T-cell (primary cell): ENCODE measurements at regions of chr13 and their contacts with region 1.

Region 1: DNA sequence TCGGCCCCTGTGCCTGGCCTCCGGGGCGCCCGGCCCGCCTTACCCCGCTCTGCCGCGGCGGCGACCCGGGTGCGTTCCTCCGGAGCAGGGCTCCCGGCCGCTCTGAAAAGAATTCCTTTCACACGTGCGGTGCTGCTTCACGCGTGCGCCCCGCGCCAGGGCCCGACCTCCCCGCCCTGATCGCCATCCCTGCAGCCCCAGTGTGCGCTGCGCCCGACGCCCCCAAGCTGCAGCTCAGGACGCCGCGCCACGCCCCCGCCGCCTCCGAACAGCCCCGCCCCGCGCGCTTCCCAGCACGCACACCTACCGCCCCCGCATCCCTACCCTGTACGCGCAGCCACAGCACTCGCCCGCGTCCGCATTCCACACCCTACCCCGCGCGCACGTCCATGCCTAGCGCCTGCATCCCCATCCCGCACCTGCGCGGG is at the start of gene GJA3:
- DNase-seq: peak in 34 of 35 experiments; percentile 5 to 67 (median 40)
- ATAC-seq: peak; percentile 73 to 78 (median 74)
- H3K4me3 ChIP-seq: peak within 1 kb of the TSS; percentile 43 to 77
- H3K4me3 Mint-ChIP-seq: peak within 1 kb of the TSS; percentile 81 to 85 (median 82)
- H3K27ac ChIP-seq: no peak within 1 kb of the TSS
- H3K27ac Mint-ChIP-seq: peak within 1 kb of the TSS in 1 of 2 donors; percentile 72
- H3K4me1 ChIP-seq: peaks cover 4 to 20% of the 10 kb centered on the region in 2 experiments
- H3K4me1 Mint-ChIP-seq: peaks cover 17 to 22% (median 18%) of the 10 kb centered on the region in 3 donors
- H3K27me3 ChIP-seq: peaks cover 19 to 43% of the 10 kb centered on the region in 2 experiments
- H3K27me3 Mint-ChIP-seq: peaks cover 22 to 58% of the 10 kb centered on the region in 2 donors
- total RNA-seq, gene GJA3: 0.10 to 0.93 (median 0.42) TPM

Region 2: GRCh38 chr13:19984430-19985218 is 176.2 kb before region 1 on chr13:
- CTCF ChIA-PET with region 1: interaction called, 3 to 10 read pairs
- POLR2A ChIA-PET with region 1: interaction called in 1 of 2 experiments, 11 read pairs
- DNase-seq: peak in 2 of 35 experiments; percentile 5 to 54
- ATAC-seq: peak; percentile 37 to 70 (median 39)
- H3K4me3 ChIP-seq: no peak overlapping the region
- H3K4me3 Mint-ChIP-seq: no peak overlapping the region
- H3K27ac ChIP-seq: no peak overlapping the region
- H3K27ac Mint-ChIP-seq: peak overlapping the region in 1 of 2 donors; percentile 23
- H3K4me1 ChIP-seq: peaks cover 0 to 6% of the 10 kb centered on the region in 2 experiments
- H3K4me1 Mint-ChIP-seq: peaks cover 44 to 62% (median 58%) of the 10 kb centered on the region in 3 donors
- H3K27me3 ChIP-seq: no peaks in the 10 kb centered on the region
- H3K27me3 Mint-ChIP-seq: no peaks in the 10 kb centered on the region

Region 3: GRCh38 chr13:20118268-20119140 is 42.4 kb before region 1 on chr13:
- CTCF ChIA-PET with region 1: interaction called in 1 of 2 experiments, 3 read pairs
- POLR2A ChIA-PET with region 1: interaction called in 1 of 2 experiments, 10 read pairs
- DNase-seq: peak in 21 of 35 experiments; percentile 9 to 60 (median 30)
- ATAC-seq: peak; percentile 41 to 53 (median 47)
- H3K4me3 ChIP-seq: peak overlapping the region; percentile 73 to 86
- H3K4me3 Mint-ChIP-seq: peak overlapping the region; percentile 82 to 91 (median 87)
- H3K27ac ChIP-seq: peak overlapping the region; percentile 78
- H3K27ac Mint-ChIP-seq: peak overlapping the region; percentile 85 to 91
- H3K4me1 ChIP-seq: peaks cover 3 to 30% of the 10 kb centered on the region in 2 experiments
- H3K4me1 Mint-ChIP-seq: peaks cover 18 to 23% (median 22%) of the 10 kb centered on the region in 3 donors
- H3K27me3 ChIP-seq: peaks cover 0 to 6% of the 10 kb centered on the region in 2 experiments
- H3K27me3 Mint-ChIP-seq: peaks cover 0 to 7% of the 10 kb centered on the region in 2 donors

Region 4: GRCh38 chr13:20311596-20311995 is 150.7 kb after region 1 on chr13:
- CTCF ChIA-PET with region 1: no interaction called
- POLR2A ChIA-PET with region 1: interaction called in 1 of 2 experiments, 18 read pairs
- DNase-seq: no peak
- ATAC-seq: no peak
- H3K4me3 ChIP-seq: no peak overlapping the region
- H3K4me3 Mint-ChIP-seq: no peak overlapping the region
- H3K27ac ChIP-seq: no peak overlapping the region
- H3K27ac Mint-ChIP-seq: no peak overlapping the region
- H3K4me1 ChIP-seq: no peaks in the 10 kb centered on the region
- H3K4me1 Mint-ChIP-seq: no peaks in the 10 kb centered on the region
- H3K27me3 ChIP-seq: peaks cover 0 to 2% of the 10 kb centered on the region in 2 experiments
- H3K27me3 Mint-ChIP-seq: peaks cover 3 to 7% of the 10 kb centered on the region in 2 donors

Region 5: GRCh38 chr13:20411638-20412360 is 250.9 kb after region 1 on chr13:
- CTCF ChIA-PET with region 1: no interaction called
- POLR2A ChIA-PET with region 1: no interaction called
- DNase-seq: peak in 22 of 35 experiments; percentile 9 to 63 (median 30)
- ATAC-seq: peak; percentile 84 to 94 (median 91)
- H3K4me3 ChIP-seq: no peak overlapping the region
- H3K4me3 Mint-ChIP-seq: peak overlapping the region in 2 of 3 donors; percentile 15 to 71
- H3K27ac ChIP-seq: peak overlapping the region; percentile 47
- H3K27ac Mint-ChIP-seq: peak overlapping the region; percentile 70 to 77
- H3K4me1 ChIP-seq: peaks cover 16 to 18% of the 10 kb centered on the region in 2 experiments
- H3K4me1 Mint-ChIP-seq: peaks cover 24 to 37% (median 24%) of the 10 kb centered on the region in 3 donors
- H3K27me3 ChIP-seq: no peaks in the 10 kb centered on the region
- H3K27me3 Mint-ChIP-seq: no peaks in the 10 kb centered on the region